ENCODE measurements at regions of chr12 and their contacts with region 1.

Region 1: DNA sequence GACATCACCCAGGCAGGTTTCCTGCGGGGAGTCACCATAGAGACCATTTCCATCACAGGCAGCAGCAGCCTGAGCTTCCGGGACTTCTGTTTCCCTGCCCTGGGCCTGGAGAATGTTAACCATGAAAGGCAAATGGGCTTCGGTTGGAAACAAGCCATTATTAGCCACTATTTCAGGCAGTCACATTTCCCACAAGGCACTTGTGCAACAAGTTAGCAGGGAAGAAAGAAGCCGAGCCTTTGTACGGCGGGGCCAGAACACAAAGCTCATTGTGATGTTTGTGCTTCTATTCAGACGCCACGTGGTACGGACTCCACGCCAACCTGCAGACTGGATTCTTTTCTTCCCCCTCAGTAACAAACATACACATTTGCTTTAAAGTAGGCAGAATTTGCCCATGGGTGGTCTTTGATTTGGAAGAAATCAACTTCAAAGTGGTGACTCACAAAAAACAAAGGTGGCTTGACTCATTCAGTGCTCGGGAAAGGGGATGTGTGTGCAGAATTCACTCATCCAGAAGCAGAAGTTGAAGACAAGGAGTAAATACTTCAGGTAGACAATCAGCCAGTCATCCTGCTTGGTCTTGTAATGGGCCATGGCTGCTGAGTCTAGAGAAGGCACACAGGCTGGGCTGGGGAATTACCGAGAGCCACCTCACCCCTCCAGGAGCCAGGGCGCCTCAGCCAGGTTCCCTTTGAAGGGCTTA is 154.2 kb upstream of the PRMT8 start:
- DNase-seq: peak in 1 of 2 donors; percentile 82
- ATAC-seq: peak; percentile 74 to 89 (median 84)
- H3K4me3 ChIP-seq: no peak overlapping the region
- H3K27ac ChIP-seq: peak overlapping the region; percentile 2 to 82 (median 60)
- H3K4me1 ChIP-seq: peaks cover 9 to 57% (median 36%) of the 10 kb centered on the region in 9 donors
- H3K27me3 ChIP-seq: no peaks in the 10 kb centered on the region
- CTCF ChIP-seq: no peak

Region 2: DNA sequence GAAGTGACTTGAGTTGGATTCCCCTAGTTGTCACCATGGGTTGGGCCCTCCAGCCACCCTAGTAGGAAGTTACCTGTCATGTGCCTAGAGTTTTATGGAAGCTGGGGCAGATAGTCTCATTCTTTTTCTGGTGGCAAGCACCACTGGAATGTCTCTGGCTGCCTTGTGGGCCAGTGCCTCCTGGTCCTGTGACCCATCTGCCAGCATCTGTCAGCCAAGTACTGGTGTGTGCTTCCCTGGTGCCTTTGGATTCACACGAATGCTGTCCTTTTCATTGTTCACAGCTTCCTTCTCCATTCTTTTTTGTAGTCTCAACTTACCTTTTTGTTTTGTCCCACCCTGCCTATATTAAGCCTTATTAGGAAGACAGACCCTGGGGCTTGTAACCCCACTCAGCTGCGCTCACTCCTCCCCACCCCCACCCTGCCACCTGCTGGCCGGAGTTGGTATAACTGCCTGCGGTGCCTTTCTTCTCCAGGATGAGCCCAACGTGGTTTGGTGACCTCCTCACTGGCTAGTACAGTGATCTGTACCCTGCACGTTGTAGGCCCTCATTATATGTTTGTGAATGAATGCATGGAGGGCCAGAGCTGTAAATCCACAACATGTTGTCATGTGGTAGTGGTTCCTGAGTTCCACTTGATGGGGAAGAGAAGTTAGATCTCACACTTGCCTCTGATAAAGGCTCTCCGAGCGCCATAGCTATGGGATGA is 133.9 kb before region 1 on chr12:
- intact Hi-C with region 1: no loop called
- DNase-seq: peak; percentile 71 to 78
- ATAC-seq: peak; percentile 9 to 68 (median 28)
- H3K4me3 ChIP-seq: peak overlapping the region in 9 of 10 donors; percentile 41 to 79 (median 59)
- H3K27ac ChIP-seq: peak overlapping the region; percentile 62 to 93 (median 86)
- H3K4me1 ChIP-seq: peaks cover 32 to 76% (median 59%) of the 10 kb centered on the region in 9 donors
- H3K27me3 ChIP-seq: peaks cover 0 to 42% (median 0%) of the 10 kb centered on the region in 7 donors
- CTCF ChIP-seq: peak; percentile 84 to 91 (median 90)

Region 3: GRCh38 chr12:3614806-3615466 is 278.2 kb after region 1 on chr12:
- intact Hi-C with region 1: loop called in 1 of 10 experiments (anchors 10 kb)
- DNase-seq: no peak
- ATAC-seq: no peak
- H3K4me3 ChIP-seq: no peak overlapping the region
- H3K27ac ChIP-seq: no peak overlapping the region
- H3K4me1 ChIP-seq: peaks cover 0 to 15% (median 0%) of the 10 kb centered on the region in 9 donors
- H3K27me3 ChIP-seq: no peaks in the 10 kb centered on the region
- CTCF ChIP-seq: no peak